A549 (cell line): ENCODE measurements at regions of chr5 and their contacts with region 1.

Region 1: DNA sequence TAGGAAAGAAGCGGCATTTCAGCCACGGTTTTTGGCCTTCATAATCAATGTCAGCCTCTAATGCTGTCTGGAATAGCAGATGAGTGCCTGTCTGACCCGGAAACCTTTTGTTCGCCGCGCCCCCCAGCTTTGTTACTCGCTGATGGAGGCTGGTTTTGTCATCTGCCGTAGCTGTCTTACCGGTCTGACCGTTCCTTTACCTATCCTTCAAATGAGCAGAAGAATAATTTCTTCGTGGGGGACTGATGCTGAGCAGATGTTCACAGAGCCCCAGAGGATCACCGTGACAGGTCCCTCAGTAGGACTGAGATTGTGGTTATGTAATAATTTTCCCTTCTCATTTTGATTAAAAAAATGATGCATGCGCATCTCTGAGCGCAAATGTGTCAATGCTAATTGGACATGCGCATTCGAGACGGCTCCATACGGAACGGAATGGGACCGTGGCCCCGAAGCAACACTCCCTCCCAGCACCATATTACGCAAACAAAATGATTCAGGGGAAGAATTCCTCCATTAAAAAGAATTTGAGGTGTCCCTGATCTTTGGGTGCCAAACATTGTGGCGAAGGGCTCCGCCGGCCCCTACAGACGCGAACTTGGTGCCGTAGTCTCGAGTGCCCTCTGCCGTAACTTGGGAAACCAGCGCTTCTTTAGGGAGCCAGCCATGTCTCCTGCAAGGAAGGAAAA is 27.6 kb downstream of the TLX3 start:
- DNase-seq: peak; percentile 32 to 70
- ATAC-seq: peak; percentile 91 to 97
- H3K4me3 ChIP-seq: peak overlapping the region; percentile 49
- H3K27ac ChIP-seq: peak overlapping the region; percentile 68 to 81
- H3K4me1 ChIP-seq: 0 out of 3 replicates have a peak, but pooled peaks cover 4% of the 10 kb centered on the region
- CTCF ChIP-seq: peak; percentile 81
- EP300 ChIP-seq: no peak
- POLR2A ChIP-seq: no peak
- RAD21 ChIP-seq: peak; percentile 85 to 86

Region 2: GRCh38 chr5:170809551-170809950 is 527.1 kb before region 1 on chr5:
- CTCF ChIA-PET with region 1: interaction called, 39 read pairs
- POLR2A ChIA-PET with region 1: no interaction called
- DNase-seq: peak; percentile 63 to 66
- ATAC-seq: peak; percentile 97
- H3K4me3 ChIP-seq: no peak overlapping the region
- H3K27ac ChIP-seq: no peak overlapping the region
- H3K4me1 ChIP-seq: no peaks in the 10 kb centered on the region
- CTCF ChIP-seq: peak; percentile 60
- EP300 ChIP-seq: no peak
- POLR2A ChIP-seq: no peak
- RAD21 ChIP-seq: peak; percentile 78 to 81

Region 3: GRCh38 chr5:171272996-171273970 is 63.4 kb before region 1 on chr5:
- CTCF ChIA-PET with region 1: interaction called, 10 read pairs
- POLR2A ChIA-PET with region 1: no interaction called
- DNase-seq: peak in 1 of 2 experiments; percentile 55
- ATAC-seq: peak; percentile 68 to 88; a peak in 4 of 6 replicates
- H3K4me3 ChIP-seq: no peak overlapping the region
- H3K27ac ChIP-seq: no peak overlapping the region; a peak in 1 of 6 replicates
- H3K4me1 ChIP-seq: peaks cover 21% of the 10 kb centered on the region; the same call in 2 of the 3 replicates
- CTCF ChIP-seq: peak; percentile 40
- EP300 ChIP-seq: no peak
- POLR2A ChIP-seq: no peak
- RAD21 ChIP-seq: peak; percentile 33 to 51; a peak in 3 of 5 replicates

Region 4: DNA sequence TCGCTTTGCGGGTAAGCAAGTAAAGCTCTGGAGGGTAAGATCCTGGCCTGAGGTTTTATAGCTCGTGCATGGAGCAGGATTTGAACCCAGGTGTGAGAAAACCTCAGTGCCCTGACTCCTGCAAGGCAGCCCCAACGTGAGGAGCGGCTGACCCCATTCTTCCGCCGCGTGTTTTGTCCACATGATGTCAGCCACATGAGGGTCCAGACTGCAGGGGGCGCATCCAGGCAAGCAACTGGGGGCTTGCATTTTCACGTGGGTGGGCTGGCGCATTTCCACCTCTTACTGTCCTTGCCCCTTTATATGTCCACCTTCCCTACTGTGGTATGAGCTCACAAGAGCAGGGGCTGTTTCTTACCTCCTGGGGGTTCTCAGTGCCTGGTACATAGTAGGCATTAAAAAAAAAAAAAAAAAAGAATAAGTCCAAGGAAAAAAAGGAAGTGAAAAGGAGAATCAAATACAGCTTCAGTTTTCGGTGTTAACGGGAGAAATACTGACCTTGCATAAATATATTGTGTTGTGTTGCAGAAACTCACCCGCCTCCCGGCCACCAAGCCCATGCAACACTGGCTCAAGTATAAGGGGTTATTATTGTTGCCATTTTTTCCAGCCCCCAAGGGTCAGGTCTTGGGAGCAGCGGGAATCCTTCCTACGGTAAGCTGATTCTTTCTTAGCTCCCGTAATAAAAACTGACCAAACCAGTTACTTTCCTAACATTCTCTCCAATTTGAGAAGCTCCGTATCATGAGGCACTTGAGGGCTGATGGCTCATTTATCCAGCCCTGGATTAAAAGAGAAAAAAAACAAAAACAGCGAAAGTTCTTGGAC is 12.6 kb before region 1 on chr5:
- CTCF ChIA-PET with region 1: interaction called, 21 read pairs
- POLR2A ChIA-PET with region 1: no interaction called
- DNase-seq: no peak
- ATAC-seq: no peak
- H3K4me3 ChIP-seq: no peak overlapping the region
- H3K27ac ChIP-seq: no peak overlapping the region
- H3K4me1 ChIP-seq: no peaks in the 10 kb centered on the region
- CTCF ChIP-seq: no peak
- EP300 ChIP-seq: no peak
- POLR2A ChIP-seq: no peak
- RAD21 ChIP-seq: no peak

Region 5: DNA sequence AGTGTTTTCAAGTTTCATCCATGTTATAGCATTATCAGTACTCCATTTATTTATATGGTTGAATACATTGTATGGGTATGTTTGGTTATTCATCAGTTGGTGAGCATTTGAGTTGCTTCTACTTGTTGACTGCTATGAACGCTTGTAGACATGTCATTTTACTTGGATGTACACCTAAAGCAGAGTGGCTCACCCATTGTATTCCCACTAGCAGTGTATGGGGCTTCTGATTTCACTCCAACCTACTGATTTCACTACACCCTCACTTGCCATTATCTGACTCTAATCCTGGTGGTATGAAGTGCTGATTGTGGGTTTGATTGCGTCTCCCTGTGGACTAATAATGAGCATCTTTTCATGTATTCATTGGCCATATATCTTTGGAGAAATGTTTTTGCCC is 60.5 kb after region 1 on chr5:
- CTCF ChIA-PET with region 1: no interaction called
- POLR2A ChIA-PET with region 1: no interaction called
- DNase-seq: no peak
- ATAC-seq: peak; percentile 8 to 19; a peak in 4 of 6 replicates
- H3K4me3 ChIP-seq: no peak overlapping the region
- H3K27ac ChIP-seq: no peak overlapping the region
- H3K4me1 ChIP-seq: peaks cover 93% of the 10 kb centered on the region
- CTCF ChIP-seq: no peak
- EP300 ChIP-seq: no peak
- POLR2A ChIP-seq: no peak
- RAD21 ChIP-seq: no peak

Region 6: GRCh38 chr5:171469326-171469725 is 132.7 kb after region 1 on chr5:
- CTCF ChIA-PET with region 1: no interaction called
- POLR2A ChIA-PET with region 1: no interaction called
- DNase-seq: no peak
- ATAC-seq: no peak
- H3K4me3 ChIP-seq: no peak overlapping the region
- H3K27ac ChIP-seq: no peak overlapping the region
- H3K4me1 ChIP-seq: no peaks in the 10 kb centered on the region
- CTCF ChIP-seq: no peak
- EP300 ChIP-seq: no peak
- POLR2A ChIP-seq: no peak
- RAD21 ChIP-seq: no peak